PC-9 (cell line): ENCODE measurements at regions of chr2 and their contacts with region 1.

Region 1: GRCh38 chr2:191302459-191303139 is 57.4 kb downstream of the MYO1B start:
- DNase-seq: peak; percentile 37 to 40
- H3K4me3 ChIP-seq: no peak overlapping the region
- H3K27ac ChIP-seq: no peak overlapping the region
- H3K4me1 ChIP-seq: peaks cover 12% of the 10 kb centered on the region
- H3K27me3 ChIP-seq: no peaks in the 10 kb centered on the region
- CTCF ChIP-seq: peak; percentile 46; the same call in 1 of the 2 replicates

Region 2: DNA sequence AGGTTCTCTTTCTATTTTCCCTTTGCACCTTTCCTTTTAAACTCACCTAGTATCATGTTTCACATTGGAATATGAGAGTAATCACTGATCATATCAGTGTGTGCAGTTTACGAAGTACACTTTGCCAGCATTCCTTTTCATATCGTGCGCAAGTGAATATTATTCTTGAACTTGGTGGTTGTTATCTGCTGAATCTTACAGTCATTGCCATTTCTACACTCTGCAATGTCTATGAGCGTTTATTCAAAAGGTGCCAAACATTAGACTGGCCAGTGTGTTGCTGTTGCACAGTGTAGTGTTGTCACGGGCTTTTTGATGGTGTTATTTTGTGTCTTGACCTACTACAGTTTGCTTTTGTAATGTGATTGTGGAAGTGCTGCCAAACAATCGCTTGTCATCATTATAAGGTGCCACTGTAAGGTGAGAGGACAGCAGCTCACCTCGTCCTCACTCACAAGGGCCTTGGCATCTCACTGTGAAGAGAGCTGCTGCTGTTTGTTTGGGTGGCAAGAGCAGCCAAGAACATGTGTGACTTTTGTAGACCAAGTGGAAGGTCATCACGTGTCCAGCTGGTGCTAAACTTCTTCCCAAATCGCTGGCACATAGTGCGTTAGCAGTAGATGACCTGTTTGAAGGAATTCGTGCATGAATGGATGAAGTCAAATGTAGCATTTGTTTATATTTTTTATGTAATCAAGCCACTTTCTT is 55.9 kb after region 1 on chr2:
- CTCF ChIA-PET with region 1: no interaction called
- POLR2A ChIA-PET with region 1: no interaction called
- intact Hi-C with region 1: loop called (anchors 5 kb)
- DNase-seq: peak; percentile 15 to 77
- H3K4me3 ChIP-seq: no peak overlapping the region
- H3K27ac ChIP-seq: no peak overlapping the region
- H3K4me1 ChIP-seq: no peaks in the 10 kb centered on the region
- H3K27me3 ChIP-seq: no peaks in the 10 kb centered on the region
- CTCF ChIP-seq: no peak

Region 3: GRCh38 chr2:191386938-191387536 is 84.4 kb after region 1 on chr2:
- CTCF ChIA-PET with region 1: no interaction called
- POLR2A ChIA-PET with region 1: no interaction called
- intact Hi-C with region 1: no loop called
- DNase-seq: peak in 1 of 2 experiments; percentile 67
- H3K4me3 ChIP-seq: no peak overlapping the region
- H3K27ac ChIP-seq: peak overlapping the region; percentile 26; the same call in 1 of the 2 replicates
- H3K4me1 ChIP-seq: peaks cover 17% of the 10 kb centered on the region
- H3K27me3 ChIP-seq: no peaks in the 10 kb centered on the region
- CTCF ChIP-seq: no peak